ENCODE measurements at regions of chr14 and their contacts with region 1.

Region 1: GRCh38 chr14:24160850-24161804 is at the start of gene IRF9:
- H3K4me3 ChIP-seq: peak within 1 kb of the TSS; percentile 46
- H3K27ac ChIP-seq: 0 out of 2 replicates have a peak within 1 kb of the TSS, but pooled peaks have one; percentile 13
- H3K4me1 ChIP-seq: peaks cover 5% of the 10 kb centered on the region
- CTCF ChIP-seq: peak; percentile 95

Region 2: DNA sequence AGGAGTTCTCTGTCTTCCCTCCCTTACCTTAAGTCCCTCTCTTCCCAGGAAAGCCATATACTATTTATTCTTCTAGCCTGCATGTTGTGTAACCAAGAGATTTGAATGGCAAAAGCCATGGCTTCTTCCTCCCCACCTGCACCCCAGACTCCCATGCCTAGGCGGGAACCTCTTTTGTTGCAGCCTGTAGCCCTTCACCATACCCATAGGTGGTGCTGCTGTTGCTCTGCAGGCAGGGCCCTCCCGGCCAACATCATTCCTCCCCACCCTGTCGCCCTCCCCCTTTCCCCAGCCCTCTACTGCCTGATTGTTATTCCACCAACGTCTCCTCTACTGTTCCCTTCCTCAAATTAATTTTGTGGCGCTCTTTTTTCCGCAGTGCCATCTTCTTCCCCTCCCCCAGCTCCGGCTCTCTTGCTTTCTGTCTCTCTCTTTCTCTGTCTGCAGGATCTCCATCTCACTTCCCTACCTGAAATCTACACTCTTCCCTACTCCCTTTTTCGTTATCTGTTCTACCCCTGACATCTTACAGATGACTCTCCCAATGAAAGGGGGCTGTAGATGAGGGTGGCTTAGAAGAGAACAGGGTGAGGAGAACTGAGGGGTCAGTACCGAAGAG is 677.8 kb before region 1 on chr14:
- CTCF ChIA-PET with region 1: no interaction called
- POLR2A ChIA-PET with region 1: no interaction called
- H3K4me3 ChIP-seq: no peak overlapping the region
- H3K27ac ChIP-seq: no peak overlapping the region
- H3K4me1 ChIP-seq: no peaks in the 10 kb centered on the region
- CTCF ChIP-seq: peak; percentile 82

Region 3: DNA sequence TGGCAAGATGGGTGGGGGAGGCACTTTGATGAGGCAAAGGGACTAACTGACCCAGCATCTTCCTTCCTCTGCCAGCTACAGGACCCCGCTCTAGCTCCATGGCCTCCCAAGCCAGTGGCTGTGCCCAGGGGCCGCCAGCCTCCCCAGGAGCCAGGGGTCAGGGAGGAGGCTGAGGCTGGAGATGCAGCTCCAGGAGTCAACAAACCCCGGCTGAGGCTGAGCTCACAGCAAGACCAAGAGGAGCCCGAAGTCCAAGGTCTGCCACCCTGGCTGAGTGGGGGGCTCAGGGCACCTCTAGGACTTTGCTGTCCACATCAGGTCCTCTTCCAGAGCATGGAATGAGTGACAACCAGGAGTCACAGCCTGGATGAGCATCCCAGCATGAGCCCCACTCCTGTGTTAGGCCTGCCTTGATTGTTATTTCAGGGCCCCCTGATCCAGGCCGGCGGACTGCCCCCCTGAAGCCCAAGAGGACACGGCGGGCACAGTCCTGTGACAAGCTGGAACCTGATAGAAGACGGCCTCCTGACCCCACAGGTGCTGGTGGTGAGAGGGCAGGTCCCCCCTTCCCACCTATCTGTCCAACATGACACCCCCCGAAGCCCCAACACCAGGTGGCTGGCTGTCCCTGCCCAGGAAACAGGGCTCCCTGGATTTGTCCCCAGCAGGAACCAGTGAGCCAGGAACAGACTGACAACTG is 92.3 kb before region 1 on chr14:
- CTCF ChIA-PET with region 1: no interaction called
- POLR2A ChIA-PET with region 1: no interaction called
- H3K4me3 ChIP-seq: no peak overlapping the region
- H3K27ac ChIP-seq: no peak overlapping the region
- H3K4me1 ChIP-seq: no peaks in the 10 kb centered on the region
- CTCF ChIP-seq: no peak

Region 4: DNA sequence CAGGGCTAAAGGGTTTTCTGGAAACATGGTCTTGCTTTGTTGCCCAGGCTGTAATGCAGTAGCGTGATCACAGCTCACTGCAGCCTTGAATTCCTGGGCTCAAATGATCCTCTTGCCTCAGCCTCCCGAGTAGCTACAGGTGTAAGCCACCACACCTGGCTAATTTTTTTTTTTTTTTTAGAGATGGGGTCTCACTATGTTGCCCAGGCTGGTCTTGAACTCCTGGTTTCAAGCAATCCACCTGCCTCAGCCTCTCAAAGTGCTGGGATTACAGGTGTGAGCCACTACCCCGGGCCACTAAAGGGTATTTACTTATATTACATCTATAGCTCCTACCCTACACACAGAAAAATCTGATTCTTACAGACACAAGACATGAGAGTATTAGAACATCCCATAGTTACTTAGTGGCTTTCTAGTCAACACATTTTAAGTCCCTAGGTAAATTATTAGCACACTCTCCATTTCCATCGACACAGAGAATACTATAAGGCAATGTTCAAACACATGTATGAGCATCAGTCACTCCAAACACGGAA is 52.7 kb before region 1 on chr14:
- CTCF ChIA-PET with region 1: interaction called, 13 read pairs
- POLR2A ChIA-PET with region 1: interaction called, 6 read pairs
- H3K4me3 ChIP-seq: no peak overlapping the region
- H3K27ac ChIP-seq: no peak overlapping the region
- H3K4me1 ChIP-seq: no peaks in the 10 kb centered on the region
- CTCF ChIP-seq: no peak

Region 5: GRCh38 chr14:24135834-24136542 is 25.1 kb before region 1 on chr14 and contains the start of gene PSME1:
- CTCF ChIA-PET with region 1: interaction called, 4 read pairs
- POLR2A ChIA-PET with region 1: interaction called, 24 read pairs
- H3K4me3 ChIP-seq: peak within 1 kb of the TSS; percentile 92
- H3K27ac ChIP-seq: peak within 1 kb of the TSS; percentile 90
- H3K4me1 ChIP-seq: peaks cover 4% of the 10 kb centered on the region; the same call in 1 of the 2 replicates
- CTCF ChIP-seq: peak; percentile 8; the same call in 1 of the 2 replicates

Region 6: GRCh38 chr14:24146978-24147760 is 14.0 kb before region 1 on chr14 and contains the start of gene RNF31:
- CTCF ChIA-PET with region 1: interaction called, 34 read pairs
- POLR2A ChIA-PET with region 1: interaction called, 44 read pairs
- H3K4me3 ChIP-seq: peak within 1 kb of the TSS; percentile 91
- H3K27ac ChIP-seq: peak within 1 kb of the TSS; percentile 81; the same call in 1 of the 2 replicates
- H3K4me1 ChIP-seq: peaks cover 8% of the 10 kb centered on the region
- CTCF ChIP-seq: no peak

Region 7: DNA sequence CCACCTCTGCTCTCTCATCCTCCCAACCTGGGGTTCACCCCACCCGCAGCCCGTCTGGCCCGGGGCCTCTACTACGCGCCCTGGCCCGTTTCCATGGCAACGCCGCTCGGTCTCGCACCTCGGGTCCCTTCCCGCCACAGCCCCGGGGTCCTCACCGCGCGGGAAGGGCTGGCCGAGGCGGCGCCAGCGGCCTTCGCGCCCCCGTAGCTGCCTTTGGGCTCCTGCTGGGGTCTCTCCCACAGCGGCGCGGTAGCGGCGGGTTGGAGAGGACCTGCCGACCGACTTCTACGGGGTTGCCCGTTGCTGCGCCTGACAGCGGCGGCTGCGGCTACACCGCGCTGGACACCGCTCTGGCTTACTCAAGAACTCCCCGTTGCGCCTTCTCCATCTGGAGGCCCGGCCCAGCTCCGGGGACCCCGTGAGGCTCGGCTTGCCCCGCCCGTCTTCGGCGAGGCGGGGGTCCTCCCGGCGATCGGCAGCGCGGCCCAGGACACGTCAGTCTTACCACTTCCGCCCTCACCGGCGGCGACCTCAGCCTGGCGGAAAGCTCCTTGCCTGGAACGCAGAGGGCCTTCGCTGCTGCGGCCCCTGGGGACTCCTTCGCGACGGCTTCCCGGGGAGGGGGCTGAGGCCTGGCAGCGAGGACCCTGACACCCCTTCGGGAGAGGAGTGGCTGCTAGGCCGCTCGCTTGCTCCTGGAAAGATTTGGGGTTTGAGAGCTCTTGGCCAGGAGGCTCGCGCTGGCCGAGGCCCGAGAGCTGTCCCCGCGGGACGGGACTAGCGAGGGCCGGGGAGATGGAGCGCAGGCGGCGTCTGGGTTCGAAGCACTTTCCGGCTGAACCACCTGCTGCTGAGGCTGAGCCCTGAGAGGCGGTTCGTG is 34.3 kb after region 1 on chr14 and contains the start of gene TM9SF1:
- CTCF ChIA-PET with region 1: interaction called, 10 read pairs
- POLR2A ChIA-PET with region 1: interaction called, 9 read pairs
- H3K4me3 ChIP-seq: peak within 1 kb of the TSS; percentile 89
- H3K27ac ChIP-seq: peak within 1 kb of the TSS; percentile 97
- H3K4me1 ChIP-seq: peaks cover 4% of the 10 kb centered on the region; the same call in 1 of the 2 replicates
- CTCF ChIP-seq: 0 out of 2 replicates have a peak, but pooled peaks have one; percentile 29

Region 8: DNA sequence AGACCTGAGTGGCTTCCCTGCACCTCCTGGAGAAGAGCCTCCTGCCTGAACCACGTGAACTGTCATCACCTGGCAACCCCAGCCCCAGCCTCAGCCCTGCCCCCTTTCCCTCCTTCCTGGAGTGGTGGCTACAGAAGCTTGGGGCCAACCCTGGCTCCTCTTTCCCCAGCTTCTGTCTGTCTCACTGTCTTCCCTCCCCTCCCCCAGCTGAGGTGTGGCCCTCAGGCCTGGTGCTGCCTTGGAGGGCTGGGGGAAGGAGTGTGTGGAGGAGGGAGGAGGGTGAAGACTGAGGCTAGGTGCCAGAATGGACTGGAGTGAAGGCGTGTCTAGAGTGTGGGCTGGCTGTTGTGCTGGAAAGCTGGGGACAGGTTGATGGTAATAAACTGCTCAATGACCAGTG is 216.5 kb after region 1 on chr14:
- CTCF ChIA-PET with region 1: no interaction called
- POLR2A ChIA-PET with region 1: no interaction called
- H3K4me3 ChIP-seq: no peak overlapping the region
- H3K27ac ChIP-seq: no peak overlapping the region
- H3K4me1 ChIP-seq: peaks cover 12% of the 10 kb centered on the region
- CTCF ChIP-seq: no peak

Measured in HEK293 (cell line).